Activated CD4-positive, alpha-beta memory T cell treated with anti-CD3 and anti-CD28 coated beads for 36 hours (primary cell): ENCODE measurements at regions of chr10 and their contacts with region 1.

Region 1: DNA sequence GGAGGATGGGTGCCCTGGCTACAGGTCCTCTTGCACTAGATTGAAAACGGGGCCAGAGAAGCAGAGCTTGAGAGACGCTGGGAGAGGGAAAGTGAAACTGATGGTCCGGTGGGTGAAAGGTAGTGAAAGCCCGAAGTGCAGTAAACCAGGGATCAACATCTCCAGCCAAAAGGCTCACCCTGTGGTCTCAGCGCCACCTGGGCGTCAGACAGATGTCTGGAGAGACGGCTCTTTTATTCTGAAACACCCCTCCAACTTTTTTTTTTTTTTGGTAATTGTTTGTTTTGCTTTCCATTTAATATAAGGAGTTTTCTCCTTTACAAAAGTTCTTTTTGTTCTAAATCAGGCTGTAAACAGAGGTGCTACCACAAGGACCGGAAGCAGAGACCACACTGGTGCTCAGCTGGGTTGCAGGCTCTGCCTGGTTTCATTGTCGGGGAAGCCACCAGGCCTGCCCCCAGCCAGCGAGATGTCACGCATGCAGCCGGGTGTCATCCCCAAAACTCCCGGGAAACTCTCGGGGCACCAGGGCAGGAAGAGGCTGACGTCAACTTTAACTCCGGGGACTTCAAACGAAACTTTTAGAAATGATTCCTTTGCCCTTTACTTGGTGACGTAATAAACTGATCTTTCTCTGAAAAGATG is 11.2 kb downstream of the IL2RA start:
- DNase-seq: peak; percentile 97
- H3K4me3 Mint-ChIP-seq: peak overlapping the region; percentile 83
- H3K27ac Mint-ChIP-seq: peak overlapping the region; percentile 98
- H3K4me1 Mint-ChIP-seq: peaks cover 86% of the 10 kb centered on the region
- H3K27me3 Mint-ChIP-seq: no peaks in the 10 kb centered on the region

Region 2: GRCh38 chr10:5684318-5684970 is 366.5 kb before region 1 on chr10 and contains the start of gene TASOR2:
- CTCF ChIA-PET with region 1: no interaction called
- POLR2A ChIA-PET with region 1: no interaction called
- intact Hi-C with region 1: loop called (anchors 10 kb)
- DNase-seq: peak; percentile 98
- H3K4me3 Mint-ChIP-seq: peak within 1 kb of the TSS; percentile 98
- H3K27ac Mint-ChIP-seq: peak within 1 kb of the TSS; percentile 94
- H3K4me1 Mint-ChIP-seq: peaks cover 56% of the 10 kb centered on the region
- H3K27me3 Mint-ChIP-seq: peaks cover 3% of the 10 kb centered on the region
- total RNA-seq, gene TASOR2: 41.8 to 43.8 TPM

Region 3: DNA sequence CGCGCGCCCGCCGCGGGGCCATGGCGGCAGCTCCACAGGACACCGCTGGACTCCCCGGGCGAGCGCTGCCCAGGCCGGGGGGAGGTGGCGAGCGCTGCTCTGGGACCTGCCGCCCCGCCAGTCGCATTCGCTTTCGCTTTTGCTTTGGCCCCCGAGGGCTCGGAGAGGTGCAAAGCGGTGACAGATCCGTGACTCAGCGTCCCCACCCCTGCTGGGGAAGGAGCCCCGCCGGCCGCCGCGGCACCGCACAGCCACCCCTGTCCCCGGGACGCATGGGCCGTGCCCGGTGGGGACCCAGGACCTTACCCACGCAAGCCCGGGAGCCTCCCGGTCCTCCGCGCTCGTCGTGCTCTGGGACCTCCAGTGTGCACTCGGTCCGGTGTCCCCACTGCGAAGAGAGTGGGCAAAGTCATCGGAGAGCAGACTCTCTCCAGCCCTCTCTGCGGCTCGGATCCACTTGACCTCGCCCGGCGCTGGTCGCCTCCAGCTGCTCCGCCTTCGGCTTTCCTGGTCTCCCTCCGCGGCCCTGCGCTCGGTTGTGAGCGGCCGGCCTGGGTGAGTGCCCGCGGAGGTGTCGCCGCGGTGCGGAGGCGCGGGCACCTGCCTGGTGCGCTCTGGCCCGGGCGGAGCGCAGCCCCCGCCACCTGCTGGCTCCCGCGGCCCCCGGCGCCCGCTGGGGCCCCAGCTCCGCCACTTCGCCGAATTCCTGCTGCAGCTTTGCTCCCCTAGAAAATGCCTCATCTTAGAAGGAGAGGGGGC is 73.3 kb before region 1 on chr10 and contains the start of gene IL15RA:
- CTCF ChIA-PET with region 1: interaction called, 3 read pairs
- POLR2A ChIA-PET with region 1: interaction called, 12 read pairs
- intact Hi-C with region 1: loop called (anchors 2 kb)
- DNase-seq: peak; percentile 93
- H3K4me3 Mint-ChIP-seq: peak within 1 kb of the TSS; percentile 91
- H3K27ac Mint-ChIP-seq: peak within 1 kb of the TSS; percentile 93
- H3K4me1 Mint-ChIP-seq: peaks cover 30% of the 10 kb centered on the region
- H3K27me3 Mint-ChIP-seq: no peaks in the 10 kb centered on the region
- total RNA-seq, gene IL15RA: 20.1 to 20.2 TPM

Region 4: GRCh38 chr10:6068422-6068821 is 17.5 kb after region 1 on chr10:
- CTCF ChIA-PET with region 1: interaction called, 7 read pairs
- POLR2A ChIA-PET with region 1: interaction called, 343 read pairs
- intact Hi-C with region 1: loop called (anchors 1 kb)
- DNase-seq: peak; percentile 66
- H3K4me3 Mint-ChIP-seq: peak overlapping the region; percentile 71
- H3K27ac Mint-ChIP-seq: peak overlapping the region; percentile 96
- H3K4me1 Mint-ChIP-seq: peaks cover 92% of the 10 kb centered on the region
- H3K27me3 Mint-ChIP-seq: peaks cover 2% of the 10 kb centered on the region

Region 5: GRCh38 chr10:6144406-6145165 is 93.7 kb after region 1 on chr10:
- CTCF ChIA-PET with region 1: no interaction called
- POLR2A ChIA-PET with region 1: no interaction called
- intact Hi-C with region 1: loop called (anchors 2 kb)
- DNase-seq: peak; percentile 93
- H3K4me3 Mint-ChIP-seq: peak overlapping the region; percentile 80
- H3K27ac Mint-ChIP-seq: peak overlapping the region; percentile 83
- H3K4me1 Mint-ChIP-seq: peaks cover 84% of the 10 kb centered on the region
- H3K27me3 Mint-ChIP-seq: peaks cover 1% of the 10 kb centered on the region

Region 6: DNA sequence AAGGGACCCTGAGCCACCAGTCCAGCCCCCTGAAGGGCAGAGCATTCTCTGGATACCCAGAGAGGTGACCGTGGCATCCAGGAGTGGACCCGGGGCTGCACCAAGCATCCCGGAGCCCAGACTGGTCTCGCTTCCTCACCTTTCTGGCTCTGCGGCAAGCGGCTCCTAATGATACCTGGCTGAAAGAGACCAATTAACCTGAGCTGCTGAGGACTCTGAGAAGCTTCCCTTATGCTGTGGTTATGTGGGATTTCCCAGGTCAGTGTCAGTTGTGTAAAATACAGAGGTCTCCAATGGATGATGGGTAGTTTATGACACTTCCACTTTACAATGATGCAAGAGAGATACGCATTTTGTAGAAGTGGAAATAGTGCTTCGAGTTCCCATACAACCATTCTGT is 203.3 kb after region 1 on chr10:
- CTCF ChIA-PET with region 1: no interaction called
- POLR2A ChIA-PET with region 1: no interaction called
- intact Hi-C with region 1: no loop called
- DNase-seq: no peak
- H3K4me3 Mint-ChIP-seq: no peak overlapping the region
- H3K27ac Mint-ChIP-seq: no peak overlapping the region
- H3K4me1 Mint-ChIP-seq: no peaks in the 10 kb centered on the region
- H3K27me3 Mint-ChIP-seq: no peaks in the 10 kb centered on the region

Region 7: GRCh38 chr10:6473901-6474370 is 423.0 kb after region 1 on chr10:
- CTCF ChIA-PET with region 1: no interaction called
- POLR2A ChIA-PET with region 1: no interaction called
- intact Hi-C with region 1: no loop called
- DNase-seq: peak; percentile 54
- H3K4me3 Mint-ChIP-seq: peak overlapping the region; percentile 73
- H3K27ac Mint-ChIP-seq: peak overlapping the region; percentile 93
- H3K4me1 Mint-ChIP-seq: peaks cover 48% of the 10 kb centered on the region
- H3K27me3 Mint-ChIP-seq: no peaks in the 10 kb centered on the region

Region 8: DNA sequence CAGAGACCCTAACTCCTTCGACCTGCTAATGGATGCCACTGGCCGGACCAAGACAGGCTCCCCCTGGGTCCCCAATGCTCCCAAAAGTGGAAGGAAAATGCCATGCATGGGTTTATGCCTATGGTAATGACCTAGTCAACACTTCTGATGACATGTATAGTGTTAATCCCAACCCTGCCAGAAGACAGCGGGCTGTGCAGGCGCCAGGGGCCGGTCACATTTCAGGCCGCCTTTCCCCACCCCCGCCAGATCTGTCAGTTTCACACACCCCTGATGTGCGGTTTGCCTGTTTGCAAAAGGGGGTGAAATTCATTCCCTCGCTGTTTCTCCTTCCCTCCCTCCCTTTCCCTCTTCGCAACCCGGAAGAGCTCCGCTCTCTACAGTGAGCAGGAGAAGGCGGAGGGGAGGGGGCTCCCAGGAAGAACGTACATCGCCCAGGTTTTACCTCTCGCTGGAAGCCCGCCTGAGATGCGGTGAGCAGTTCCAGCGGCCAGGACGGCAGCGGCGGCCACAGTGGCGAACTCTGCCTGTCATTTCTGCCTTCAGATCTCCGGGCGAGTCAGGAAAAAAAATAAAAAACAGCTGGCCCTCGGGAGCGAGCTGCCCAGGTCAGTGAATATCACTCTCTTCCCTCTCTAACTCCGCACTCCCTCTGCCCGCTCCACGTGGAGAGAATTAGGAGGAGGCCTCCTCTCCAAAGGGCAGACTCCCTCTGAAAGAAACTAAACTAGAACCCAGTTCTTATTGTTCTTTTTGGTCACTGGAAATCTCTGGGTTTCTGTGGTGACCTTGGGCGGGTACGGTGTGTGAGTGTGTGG is 1994.2 kb after region 1 on chr10:
- CTCF ChIA-PET with region 1: no interaction called
- POLR2A ChIA-PET with region 1: no interaction called
- intact Hi-C with region 1: loop called (anchors 10 kb)
- DNase-seq: peak; percentile 40
- H3K4me3 Mint-ChIP-seq: peak overlapping the region; percentile 64
- H3K27ac Mint-ChIP-seq: no peak overlapping the region
- H3K4me1 Mint-ChIP-seq: peaks cover 68% of the 10 kb centered on the region
- H3K27me3 Mint-ChIP-seq: peaks cover 81% of the 10 kb centered on the region